ENCODE measurements at regions of chr4 and their contacts with region 1.

Region 1: GRCh38 chr4:74385386-74385785 is 20.4 kb downstream of the EREG start:
- DNase-seq: peak in 2 of 3 donors; percentile 34 to 54
- H3K4me3 ChIP-seq: no peak overlapping the region
- H3K4me3 Mint-ChIP-seq: no peak overlapping the region
- H3K27ac ChIP-seq: peak overlapping the region in 1 of 2 donors; percentile 56
- H3K27ac Mint-ChIP-seq: peak overlapping the region in 2 of 7 donors; percentile 22 to 57
- H3K4me1 ChIP-seq: peaks cover 9 to 19% of the 10 kb centered on the region in 2 donors
- H3K4me1 Mint-ChIP-seq: peaks cover 14% of the 10 kb centered on the region
- H3K27me3 ChIP-seq: no peaks in the 10 kb centered on the region
- H3K27me3 Mint-ChIP-seq: no peaks in the 10 kb centered on the region
- CTCF ChIP-seq: no peak

Region 2: GRCh38 chr4:74370912-74371311 is 14.5 kb before region 1 on chr4:
- intact Hi-C with region 1: no loop called
- DNase-seq: peak in 2 of 3 donors; percentile 64 to 71
- H3K4me3 ChIP-seq: no peak overlapping the region
- H3K4me3 Mint-ChIP-seq: no peak overlapping the region
- H3K27ac ChIP-seq: no peak overlapping the region
- H3K27ac Mint-ChIP-seq: no peak overlapping the region
- H3K4me1 ChIP-seq: peaks cover 28 to 34% of the 10 kb centered on the region in 2 donors
- H3K4me1 Mint-ChIP-seq: peaks cover 49% of the 10 kb centered on the region
- H3K27me3 ChIP-seq: no peaks in the 10 kb centered on the region
- H3K27me3 Mint-ChIP-seq: peaks cover 0 to under 1% (median 0%) of the 10 kb centered on the region in 3 donors
- CTCF ChIP-seq: peak; percentile 68

Region 3: DNA sequence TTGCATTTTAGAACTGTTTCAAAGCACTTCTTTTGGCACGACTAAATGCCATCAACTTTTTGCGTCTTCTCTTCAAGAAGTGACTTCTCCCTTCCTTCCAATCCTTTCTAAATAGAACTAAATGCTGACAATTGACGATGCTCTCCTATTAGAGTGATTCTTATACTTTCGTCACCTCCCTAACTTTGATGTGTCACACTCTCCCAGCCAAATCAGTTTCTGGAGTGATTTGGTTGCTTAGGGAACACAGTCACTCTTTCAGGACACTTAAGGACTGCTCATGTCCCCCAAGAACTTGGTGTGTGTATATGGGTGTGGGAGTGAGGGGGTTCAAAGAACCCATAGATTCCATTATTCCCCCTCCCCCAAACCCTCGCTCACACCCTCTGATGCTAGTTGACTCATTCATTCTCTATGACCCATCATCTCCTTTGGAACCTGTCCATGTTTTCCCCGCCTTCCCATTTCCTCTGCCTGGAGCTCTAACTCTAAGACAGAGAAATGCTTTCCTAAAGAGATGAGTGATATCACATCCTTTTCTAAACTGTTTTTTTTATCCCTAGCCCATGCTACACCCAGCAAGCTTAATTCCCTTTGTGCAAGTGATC is 32.8 kb after region 1 on chr4:
- intact Hi-C with region 1: no loop called
- DNase-seq: no peak
- H3K4me3 ChIP-seq: no peak overlapping the region
- H3K4me3 Mint-ChIP-seq: no peak overlapping the region
- H3K27ac ChIP-seq: no peak overlapping the region
- H3K27ac Mint-ChIP-seq: no peak overlapping the region
- H3K4me1 ChIP-seq: no peaks in the 10 kb centered on the region
- H3K4me1 Mint-ChIP-seq: peaks cover 3% of the 10 kb centered on the region
- H3K27me3 ChIP-seq: no peaks in the 10 kb centered on the region
- H3K27me3 Mint-ChIP-seq: peaks cover 0 to 2% (median 2%) of the 10 kb centered on the region in 3 donors
- CTCF ChIP-seq: no peak

Region 4: DNA sequence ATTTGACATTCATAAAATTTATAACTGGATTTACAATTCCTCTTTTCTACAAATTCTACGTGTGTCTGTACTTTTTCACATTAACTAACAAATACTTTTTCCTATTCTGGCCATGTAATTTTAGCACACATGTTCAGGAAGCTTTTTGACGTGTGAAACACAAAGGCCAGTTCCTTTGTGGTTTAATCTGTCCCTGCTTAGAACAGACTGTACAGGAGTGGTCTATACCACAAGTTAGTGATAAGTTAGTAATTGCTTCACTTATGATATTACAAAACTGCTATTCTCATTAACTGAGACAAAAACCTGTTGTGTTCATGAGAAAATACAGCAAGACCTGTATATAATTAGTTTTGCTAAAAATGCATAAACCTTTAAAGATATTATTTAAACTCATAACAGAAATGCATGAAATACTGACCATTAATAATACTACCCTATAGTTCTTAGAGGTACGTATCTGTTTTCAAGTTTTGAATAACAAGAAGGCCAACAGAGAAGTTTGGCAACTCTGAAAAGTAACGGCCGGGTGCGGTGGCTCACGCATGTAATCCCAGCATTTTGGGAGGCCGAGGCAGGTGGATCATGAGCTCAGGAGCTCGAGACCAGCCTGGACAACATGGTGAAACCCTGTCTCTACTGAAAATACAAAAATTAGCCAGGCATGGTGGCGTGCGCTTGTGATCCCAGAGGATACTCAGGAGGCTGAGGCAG is 45.9 kb after region 1 on chr4:
- intact Hi-C with region 1: loop called in 1 of 2 experiments (anchors 10 kb)
- DNase-seq: no peak
- H3K4me3 ChIP-seq: no peak overlapping the region
- H3K4me3 Mint-ChIP-seq: no peak overlapping the region
- H3K27ac ChIP-seq: no peak overlapping the region
- H3K27ac Mint-ChIP-seq: no peak overlapping the region
- H3K4me1 ChIP-seq: peaks cover 2 to 10% of the 10 kb centered on the region in 2 donors
- H3K4me1 Mint-ChIP-seq: peaks cover 6% of the 10 kb centered on the region
- H3K27me3 ChIP-seq: no peaks in the 10 kb centered on the region
- H3K27me3 Mint-ChIP-seq: no peaks in the 10 kb centered on the region
- CTCF ChIP-seq: no peak

Region 5: DNA sequence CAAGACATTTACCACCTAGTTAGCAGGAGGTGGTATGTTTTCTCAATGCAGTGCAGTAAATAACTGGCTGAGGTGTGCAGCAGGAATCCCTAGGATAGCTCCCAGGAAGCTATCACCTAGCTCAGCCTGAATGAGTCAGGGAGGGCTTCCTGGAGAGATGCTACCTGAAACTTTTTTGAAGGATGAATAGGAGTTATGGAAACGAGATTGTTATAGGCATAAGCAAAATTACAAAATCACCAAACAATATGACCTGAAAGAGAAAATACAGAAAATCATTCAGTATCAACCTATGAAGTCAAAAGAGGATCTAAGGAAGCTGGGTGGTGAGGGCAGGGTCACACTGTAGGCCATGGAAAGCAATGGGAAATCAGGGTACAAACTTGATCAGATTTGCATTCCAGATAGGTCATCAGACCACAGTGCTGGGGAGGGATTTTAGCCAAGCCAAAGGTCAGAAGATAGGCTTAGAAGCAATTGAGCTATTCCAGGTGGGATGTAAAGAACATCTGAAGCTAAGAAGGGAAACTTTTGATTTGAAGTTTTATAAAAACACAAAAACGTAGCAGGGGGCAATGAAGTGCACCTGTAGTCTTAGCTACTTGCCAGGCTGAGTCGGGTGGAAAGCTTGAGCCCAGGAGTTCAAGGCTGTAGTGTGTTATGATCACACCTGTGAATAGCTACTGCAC is 70.8 kb after region 1 on chr4:
- intact Hi-C with region 1: no loop called
- DNase-seq: no peak
- H3K4me3 ChIP-seq: no peak overlapping the region
- H3K4me3 Mint-ChIP-seq: no peak overlapping the region
- H3K27ac ChIP-seq: no peak overlapping the region
- H3K27ac Mint-ChIP-seq: no peak overlapping the region
- H3K4me1 ChIP-seq: no peaks in the 10 kb centered on the region
- H3K4me1 Mint-ChIP-seq: peaks cover 1% of the 10 kb centered on the region
- H3K27me3 ChIP-seq: no peaks in the 10 kb centered on the region
- H3K27me3 Mint-ChIP-seq: no peaks in the 10 kb centered on the region
- CTCF ChIP-seq: no peak

Region 6: GRCh38 chr4:74499986-74500781 is 114.8 kb after region 1 on chr4:
- intact Hi-C with region 1: no loop called
- DNase-seq: no peak
- H3K4me3 ChIP-seq: no peak overlapping the region
- H3K4me3 Mint-ChIP-seq: no peak overlapping the region
- H3K27ac ChIP-seq: no peak overlapping the region
- H3K27ac Mint-ChIP-seq: peak overlapping the region in 1 of 7 donors; percentile 66
- H3K4me1 ChIP-seq: no peaks in the 10 kb centered on the region
- H3K4me1 Mint-ChIP-seq: no peaks in the 10 kb centered on the region
- H3K27me3 ChIP-seq: no peaks in the 10 kb centered on the region
- H3K27me3 Mint-ChIP-seq: peaks cover 0 to 1% (median 0%) of the 10 kb centered on the region in 3 donors
- CTCF ChIP-seq: no peak

Measured in CD14-positive monocyte (primary cell).